ENCODE measurements at regions of chr5 and their contacts with region 1.

Region 1: GRCh38 chr5:163347671-163348070 is 89.7 kb upstream of the CCNG1 start:
- DNase-seq: peak in 7 of 9 donors; percentile 14 to 50 (median 31)
- ATAC-seq: peak; percentile 57
- H3K4me3 ChIP-seq: no peak overlapping the region
- H3K4me3 Mint-ChIP-seq: no peak overlapping the region
- H3K27ac ChIP-seq: no peak overlapping the region
- H3K27ac Mint-ChIP-seq: no peak overlapping the region
- H3K4me1 ChIP-seq: no peaks in the 10 kb centered on the region
- H3K4me1 Mint-ChIP-seq: no peaks in the 10 kb centered on the region
- H3K27me3 ChIP-seq: peaks cover 0 to 3% of the 10 kb centered on the region in 2 donors
- H3K27me3 Mint-ChIP-seq: peaks cover 0 to 22% (median 4%) of the 10 kb centered on the region in 5 donors

Region 2: GRCh38 chr5:161432798-161433197 is 1914.9 kb before region 1 on chr5:
- CTCF ChIA-PET with region 1: no interaction called
- POLR2A ChIA-PET with region 1: no interaction called
- intact Hi-C with region 1: loop called in 1 of 2 experiments (anchors 10 kb)
- DNase-seq: no peak
- ATAC-seq: no peak
- H3K4me3 ChIP-seq: no peak overlapping the region
- H3K4me3 Mint-ChIP-seq: no peak overlapping the region
- H3K27ac ChIP-seq: no peak overlapping the region
- H3K27ac Mint-ChIP-seq: no peak overlapping the region
- H3K4me1 ChIP-seq: no peaks in the 10 kb centered on the region
- H3K4me1 Mint-ChIP-seq: no peaks in the 10 kb centered on the region
- H3K27me3 ChIP-seq: no peaks in the 10 kb centered on the region
- H3K27me3 Mint-ChIP-seq: no peaks in the 10 kb centered on the region

Region 3: GRCh38 chr5:161544350-161544765 is 1803.3 kb before region 1 on chr5:
- CTCF ChIA-PET with region 1: no interaction called
- POLR2A ChIA-PET with region 1: no interaction called
- intact Hi-C with region 1: loop called in 1 of 2 experiments (anchors 2 kb)
- DNase-seq: no peak
- ATAC-seq: no peak
- H3K4me3 ChIP-seq: no peak overlapping the region
- H3K4me3 Mint-ChIP-seq: no peak overlapping the region
- H3K27ac ChIP-seq: no peak overlapping the region
- H3K27ac Mint-ChIP-seq: no peak overlapping the region
- H3K4me1 ChIP-seq: no peaks in the 10 kb centered on the region
- H3K4me1 Mint-ChIP-seq: peaks cover 11 to 28% (median 15%) of the 10 kb centered on the region in 7 donors
- H3K27me3 ChIP-seq: peaks cover 0 to 4% of the 10 kb centered on the region in 2 donors
- H3K27me3 Mint-ChIP-seq: peaks cover 46 to 54% (median 51%) of the 10 kb centered on the region in 5 donors

Region 4: DNA sequence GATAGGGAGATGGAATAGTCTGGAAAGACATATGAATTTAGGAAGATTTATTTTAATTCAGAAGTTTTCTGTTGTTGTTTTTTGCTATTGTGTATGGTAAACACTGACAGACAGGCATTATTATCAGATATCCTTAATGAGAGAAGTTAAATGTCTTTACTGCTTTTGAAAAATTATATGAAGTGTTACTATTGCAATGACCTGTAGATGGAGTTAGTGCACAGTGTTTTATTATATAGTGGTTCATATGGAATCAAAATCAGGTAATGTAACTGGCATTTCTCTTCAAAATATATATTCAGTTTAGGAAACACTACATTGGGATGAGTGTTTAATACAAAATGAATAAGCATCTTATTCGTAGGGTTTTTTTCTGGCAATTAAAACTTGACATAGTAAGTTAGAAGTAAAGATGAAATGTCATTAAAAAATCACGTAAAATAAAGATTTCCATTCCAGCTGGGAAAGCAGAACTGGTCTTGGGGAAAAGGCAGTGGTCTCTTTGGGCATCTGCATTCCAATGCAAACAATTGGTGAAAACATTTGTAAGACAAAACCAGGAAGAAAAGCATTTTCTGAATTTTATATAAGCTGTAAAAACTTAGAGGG is 1495.9 kb before region 1 on chr5:
- CTCF ChIA-PET with region 1: no interaction called
- POLR2A ChIA-PET with region 1: no interaction called
- intact Hi-C with region 1: loop called in 1 of 2 experiments (anchors 5 kb)
- DNase-seq: no peak
- ATAC-seq: no peak
- H3K4me3 ChIP-seq: no peak overlapping the region
- H3K4me3 Mint-ChIP-seq: no peak overlapping the region
- H3K27ac ChIP-seq: no peak overlapping the region
- H3K27ac Mint-ChIP-seq: no peak overlapping the region
- H3K4me1 ChIP-seq: no peaks in the 10 kb centered on the region
- H3K4me1 Mint-ChIP-seq: no peaks in the 10 kb centered on the region
- H3K27me3 ChIP-seq: no peaks in the 10 kb centered on the region
- H3K27me3 Mint-ChIP-seq: peaks cover 13 to 22% (median 16%) of the 10 kb centered on the region in 5 donors

Region 5: GRCh38 chr5:162410365-162410764 is 937.3 kb before region 1 on chr5:
- CTCF ChIA-PET with region 1: no interaction called
- POLR2A ChIA-PET with region 1: no interaction called
- intact Hi-C with region 1: no loop called
- DNase-seq: no peak
- ATAC-seq: no peak
- H3K4me3 ChIP-seq: no peak overlapping the region
- H3K4me3 Mint-ChIP-seq: no peak overlapping the region
- H3K27ac ChIP-seq: no peak overlapping the region
- H3K27ac Mint-ChIP-seq: no peak overlapping the region
- H3K4me1 ChIP-seq: no peaks in the 10 kb centered on the region
- H3K4me1 Mint-ChIP-seq: no peaks in the 10 kb centered on the region
- H3K27me3 ChIP-seq: no peaks in the 10 kb centered on the region
- H3K27me3 Mint-ChIP-seq: no peaks in the 10 kb centered on the region

Region 6: DNA sequence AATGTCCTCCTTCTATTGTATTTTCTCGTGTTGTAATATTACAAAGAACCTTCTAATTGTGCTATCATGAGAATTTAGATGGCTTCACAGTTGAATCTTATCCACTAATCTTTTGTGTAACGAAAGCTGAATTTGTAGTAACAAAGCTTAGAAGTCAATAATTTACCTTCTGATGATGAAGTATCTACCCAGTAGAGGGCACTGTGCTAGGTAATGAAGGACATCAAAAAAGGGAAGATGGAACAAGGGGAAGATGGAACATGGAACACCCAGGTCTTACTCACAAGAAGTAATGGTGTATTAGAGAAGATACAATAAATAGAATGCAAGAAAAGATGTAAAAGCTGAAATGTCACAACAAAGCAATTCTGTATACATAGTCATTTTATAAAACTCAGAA is 41.2 kb before region 1 on chr5:
- CTCF ChIA-PET with region 1: no interaction called
- POLR2A ChIA-PET with region 1: no interaction called
- intact Hi-C with region 1: loop called in 1 of 2 experiments (anchors 1 kb)
- DNase-seq: no peak
- ATAC-seq: peak; percentile 37
- H3K4me3 ChIP-seq: no peak overlapping the region
- H3K4me3 Mint-ChIP-seq: no peak overlapping the region
- H3K27ac ChIP-seq: no peak overlapping the region
- H3K27ac Mint-ChIP-seq: no peak overlapping the region
- H3K4me1 ChIP-seq: no peaks in the 10 kb centered on the region
- H3K4me1 Mint-ChIP-seq: peaks cover 0 to 11% (median 0%) of the 10 kb centered on the region in 7 donors
- H3K27me3 ChIP-seq: no peaks in the 10 kb centered on the region
- H3K27me3 Mint-ChIP-seq: peaks cover 0 to 7% (median 4%) of the 10 kb centered on the region in 5 donors

Region 7: GRCh38 chr5:163318707-163319106 is 29.0 kb before region 1 on chr5:
- CTCF ChIA-PET with region 1: no interaction called
- POLR2A ChIA-PET with region 1: no interaction called
- intact Hi-C with region 1: no loop called
- DNase-seq: no peak
- ATAC-seq: no peak
- H3K4me3 ChIP-seq: no peak overlapping the region
- H3K4me3 Mint-ChIP-seq: no peak overlapping the region
- H3K27ac ChIP-seq: no peak overlapping the region
- H3K27ac Mint-ChIP-seq: no peak overlapping the region
- H3K4me1 ChIP-seq: no peaks in the 10 kb centered on the region
- H3K4me1 Mint-ChIP-seq: peaks cover 0 to 2% (median 0%) of the 10 kb centered on the region in 7 donors
- H3K27me3 ChIP-seq: no peaks in the 10 kb centered on the region
- H3K27me3 Mint-ChIP-seq: peaks cover 0 to 5% (median 0%) of the 10 kb centered on the region in 5 donors

Region 8: DNA sequence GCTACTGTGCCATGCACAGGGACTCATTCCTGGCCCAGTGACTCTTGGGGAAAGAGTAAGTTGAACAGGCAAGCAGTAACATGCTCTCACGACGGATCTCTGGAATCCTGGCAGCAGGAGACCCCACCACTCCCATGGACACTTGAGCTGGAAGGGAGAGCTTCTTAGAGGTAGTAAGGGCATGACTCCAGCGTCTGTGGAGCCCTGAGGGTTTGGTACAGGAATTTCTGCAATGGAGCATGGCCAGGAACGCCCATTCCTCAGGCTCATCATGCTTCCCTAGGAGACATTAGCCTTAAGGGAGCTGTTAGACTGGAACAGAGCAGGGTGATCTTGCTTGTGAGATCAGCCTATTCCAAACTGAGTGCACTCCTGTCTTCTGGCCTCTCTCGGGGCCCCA is 370.6 kb after region 1 on chr5:
- CTCF ChIA-PET with region 1: no interaction called
- POLR2A ChIA-PET with region 1: no interaction called
- intact Hi-C with region 1: no loop called
- DNase-seq: no peak
- ATAC-seq: no peak
- H3K4me3 ChIP-seq: no peak overlapping the region
- H3K4me3 Mint-ChIP-seq: no peak overlapping the region
- H3K27ac ChIP-seq: no peak overlapping the region
- H3K27ac Mint-ChIP-seq: no peak overlapping the region
- H3K4me1 ChIP-seq: no peaks in the 10 kb centered on the region
- H3K4me1 Mint-ChIP-seq: no peaks in the 10 kb centered on the region
- H3K27me3 ChIP-seq: no peaks in the 10 kb centered on the region
- H3K27me3 Mint-ChIP-seq: no peaks in the 10 kb centered on the region